Brain microvascular endothelial cell (primary cell): ENCODE measurements at regions of chr12 and their contacts with region 1.

Region 1: GRCh38 chr12:95336390-95337067 is 118.9 kb downstream of the VEZT start:
- DNase-seq: peak; percentile 87
- H3K4me3 ChIP-seq: no peak overlapping the region
- H3K27ac ChIP-seq: no peak overlapping the region
- H3K27me3 ChIP-seq: no peaks in the 10 kb centered on the region
- CTCF ChIP-seq: peak; percentile 99

Region 2: DNA sequence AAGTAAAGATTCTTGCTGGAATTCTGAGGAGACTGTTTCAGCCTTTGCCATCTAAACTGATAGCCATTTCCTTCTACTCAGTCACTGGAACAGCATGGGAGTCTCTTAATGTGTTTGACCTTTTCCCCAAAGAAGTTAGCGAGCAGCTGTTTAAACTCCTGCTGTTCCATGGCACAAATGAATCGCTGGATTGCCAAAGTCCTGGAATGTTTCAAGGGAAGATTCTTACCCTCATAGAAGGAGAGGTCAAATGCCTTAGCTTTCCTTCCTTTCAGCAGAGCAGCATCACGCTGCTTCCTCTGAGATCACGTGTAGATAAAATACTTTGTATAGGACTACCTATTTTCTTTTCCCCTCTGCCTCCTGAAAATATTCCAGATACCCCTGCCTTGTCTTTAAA is 252.6 kb before region 1 on chr12:
- in situ Hi-C with region 1: no loop called
- DNase-seq: peak; percentile 32
- H3K4me3 ChIP-seq: no peak overlapping the region
- H3K27ac ChIP-seq: no peak overlapping the region
- H3K27me3 ChIP-seq: no peaks in the 10 kb centered on the region
- CTCF ChIP-seq: no peak

Region 3: DNA sequence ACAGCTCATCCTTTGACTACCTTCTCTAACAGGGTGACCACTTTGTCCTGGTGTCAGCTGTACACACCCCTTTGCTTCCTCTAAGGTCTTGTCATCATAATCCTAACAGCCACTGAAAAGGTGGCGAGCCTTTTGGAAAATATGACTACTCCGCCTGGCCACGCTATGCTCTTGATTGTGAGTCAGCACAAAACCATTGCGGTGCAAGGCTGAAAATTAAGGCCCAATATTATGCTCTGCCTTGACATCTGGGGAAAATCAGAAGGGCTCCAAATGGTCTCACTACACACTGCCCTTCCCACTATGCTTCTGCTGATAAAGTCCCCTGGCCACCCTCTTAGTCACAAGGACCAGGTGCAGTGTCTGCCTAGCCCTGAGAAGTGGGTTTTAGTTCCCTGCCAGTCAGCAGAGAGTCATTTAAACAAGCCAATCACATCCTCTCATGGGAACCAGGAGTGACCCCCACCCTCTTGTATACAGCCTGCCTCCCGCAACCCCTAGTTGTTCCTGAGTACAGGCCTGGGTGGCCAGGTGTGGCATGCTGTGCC is 153.6 kb before region 1 on chr12:
- in situ Hi-C with region 1: no loop called
- DNase-seq: peak; percentile 87
- H3K4me3 ChIP-seq: no peak overlapping the region
- H3K27ac ChIP-seq: peak overlapping the region; percentile 51
- H3K27me3 ChIP-seq: no peaks in the 10 kb centered on the region
- CTCF ChIP-seq: no peak

Region 4: DNA sequence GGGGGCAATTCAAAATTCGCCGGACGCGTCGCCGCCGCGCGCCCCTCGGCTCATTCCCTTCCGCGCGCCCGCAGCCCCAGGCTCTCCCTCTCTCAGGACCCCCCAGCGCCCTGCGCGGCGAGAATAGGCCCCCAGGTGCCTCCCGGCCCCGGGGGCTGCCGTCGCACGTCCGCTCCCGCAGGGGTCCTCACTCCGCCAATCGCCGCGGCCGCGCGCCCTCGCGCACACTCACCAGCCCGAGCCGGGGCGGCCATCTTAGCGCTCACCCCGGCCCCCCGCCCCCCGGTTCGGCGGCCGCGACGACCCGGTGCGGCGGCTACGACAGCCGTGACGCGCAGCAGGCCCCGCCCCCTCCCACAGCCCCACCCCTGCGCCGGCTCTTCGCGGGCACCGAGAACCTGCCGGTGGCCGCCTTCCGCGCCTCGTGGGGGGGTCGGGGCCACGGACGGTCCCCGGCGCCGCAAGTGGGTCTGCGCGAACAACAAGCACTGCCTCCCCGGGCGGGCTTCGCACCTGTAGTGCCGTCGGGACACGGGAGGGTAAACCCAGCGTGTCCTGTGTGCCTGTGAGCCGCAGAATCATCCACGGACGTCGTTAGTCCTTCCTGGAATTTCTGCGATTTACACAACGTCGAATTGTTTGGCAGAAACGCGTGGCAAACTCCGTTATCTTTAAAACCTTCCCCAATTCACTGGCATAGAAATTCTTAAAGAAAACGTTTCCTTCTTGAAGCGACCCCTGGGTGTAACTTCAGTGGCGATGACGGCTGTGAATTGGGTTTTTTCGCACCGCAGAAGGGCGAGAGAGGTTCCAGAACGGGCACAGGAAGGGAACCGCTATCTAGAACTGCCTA is 212.2 kb after region 1 on chr12:
- in situ Hi-C with region 1: loop called (anchors 25 kb)
- DNase-seq: no peak
- H3K4me3 ChIP-seq: peak overlapping the region; percentile 51
- H3K27ac ChIP-seq: no peak overlapping the region
- H3K27me3 ChIP-seq: no peaks in the 10 kb centered on the region
- CTCF ChIP-seq: no peak